Naive thymus-derived CD4-positive, alpha-beta T cell (primary cell): ENCODE measurements at regions of chr12 and their contacts with region 1.

Region 1: GRCh38 chr12:50986966-50987737 is 34.8 kb downstream of the HIGD1C start:
- DNase-seq: peak in 7 of 9 donors; percentile 14 to 56 (median 37)
- ATAC-seq: peak; percentile 53
- H3K4me3 ChIP-seq: no peak overlapping the region
- H3K4me3 Mint-ChIP-seq: no peak overlapping the region
- H3K27ac ChIP-seq: peak overlapping the region; percentile 4
- H3K27ac Mint-ChIP-seq: peak overlapping the region in 7 of 9 donors; percentile 6 to 87 (median 65)
- H3K4me1 ChIP-seq: no peaks in the 10 kb centered on the region
- H3K4me1 Mint-ChIP-seq: peaks cover 0 to 21% (median 9%) of the 10 kb centered on the region in 7 donors
- H3K27me3 ChIP-seq: no peaks in the 10 kb centered on the region
- H3K27me3 Mint-ChIP-seq: no peaks in the 10 kb centered on the region

Region 2: DNA sequence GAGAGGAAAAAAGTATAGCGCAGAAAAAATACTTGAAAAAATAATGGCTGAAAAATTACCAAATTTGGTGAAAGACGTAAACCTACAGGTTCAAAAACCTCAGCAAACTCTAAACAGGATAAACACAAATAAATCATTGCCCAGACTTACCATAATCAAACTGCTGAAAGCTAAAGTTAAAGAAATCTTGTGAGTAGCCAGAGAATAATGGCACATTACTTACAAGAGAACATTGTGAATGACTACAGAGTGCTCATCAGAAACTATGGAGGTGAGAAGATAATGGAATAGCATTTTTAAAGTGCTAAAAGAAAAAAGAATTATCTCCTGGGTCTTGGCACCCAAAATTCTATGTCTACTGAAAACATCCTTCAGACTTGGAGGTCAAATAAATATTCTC is 187.2 kb before region 1 on chr12:
- CTCF ChIA-PET with region 1: no interaction called
- POLR2A ChIA-PET with region 1: no interaction called
- intact Hi-C with region 1: no loop called
- DNase-seq: no peak
- ATAC-seq: no peak
- H3K4me3 ChIP-seq: no peak overlapping the region
- H3K4me3 Mint-ChIP-seq: no peak overlapping the region
- H3K27ac ChIP-seq: no peak overlapping the region
- H3K27ac Mint-ChIP-seq: peak overlapping the region in 1 of 9 donors; percentile 1
- H3K4me1 ChIP-seq: no peaks in the 10 kb centered on the region
- H3K4me1 Mint-ChIP-seq: peaks cover 0 to 14% (median 6%) of the 10 kb centered on the region in 7 donors
- H3K27me3 ChIP-seq: no peaks in the 10 kb centered on the region
- H3K27me3 Mint-ChIP-seq: no peaks in the 10 kb centered on the region

Region 3: DNA sequence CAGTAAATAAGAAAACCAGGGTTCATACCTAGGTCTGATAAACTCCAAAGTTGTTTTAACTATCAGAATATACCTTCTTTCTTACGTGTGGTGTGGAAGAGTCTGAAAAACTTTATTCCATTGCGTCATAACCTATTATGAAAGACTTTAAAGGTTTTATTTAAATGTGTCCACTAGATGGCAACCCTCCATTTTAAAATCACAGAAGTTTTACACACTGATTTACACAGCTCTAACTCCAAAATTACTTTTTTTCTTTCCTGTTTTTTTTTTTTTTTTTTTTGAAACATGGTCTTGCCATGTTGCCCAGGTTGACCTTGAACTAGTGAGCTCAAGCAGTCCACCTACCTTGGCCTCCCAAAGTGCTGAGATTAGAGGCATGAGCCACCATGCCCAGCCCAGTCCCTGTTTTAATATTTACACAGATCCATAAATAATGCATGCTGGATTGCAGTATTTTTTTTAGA is 161.7 kb before region 1 on chr12:
- CTCF ChIA-PET with region 1: interaction called, 28 read pairs
- POLR2A ChIA-PET with region 1: interaction called, 8 read pairs
- intact Hi-C with region 1: loop called (anchors 1 kb)
- DNase-seq: peak in 7 of 9 donors; percentile 45 to 76 (median 69)
- ATAC-seq: peak; percentile 91
- H3K4me3 ChIP-seq: no peak overlapping the region
- H3K4me3 Mint-ChIP-seq: peak overlapping the region in 2 of 10 donors; percentile 34 to 77
- H3K27ac ChIP-seq: peak overlapping the region; percentile 73
- H3K27ac Mint-ChIP-seq: peak overlapping the region; percentile 56 to 99 (median 91)
- H3K4me1 ChIP-seq: peaks cover 0 to 4% of the 10 kb centered on the region in 2 donors
- H3K4me1 Mint-ChIP-seq: peaks cover 0 to 9% (median 6%) of the 10 kb centered on the region in 7 donors
- H3K27me3 ChIP-seq: no peaks in the 10 kb centered on the region
- H3K27me3 Mint-ChIP-seq: no peaks in the 10 kb centered on the region

Region 4: GRCh38 chr12:50841716-50842531 is 145.2 kb before region 1 on chr12:
- CTCF ChIA-PET with region 1: no interaction called
- POLR2A ChIA-PET with region 1: no interaction called
- intact Hi-C with region 1: no loop called
- DNase-seq: no peak
- ATAC-seq: no peak
- H3K4me3 ChIP-seq: no peak overlapping the region
- H3K4me3 Mint-ChIP-seq: peak overlapping the region in 1 of 10 donors; percentile 22
- H3K27ac ChIP-seq: no peak overlapping the region
- H3K27ac Mint-ChIP-seq: no peak overlapping the region
- H3K4me1 ChIP-seq: no peaks in the 10 kb centered on the region
- H3K4me1 Mint-ChIP-seq: no peaks in the 10 kb centered on the region
- H3K27me3 ChIP-seq: no peaks in the 10 kb centered on the region
- H3K27me3 Mint-ChIP-seq: peaks cover 6 to 21% (median 18%) of the 10 kb centered on the region in 5 donors

Region 5: DNA sequence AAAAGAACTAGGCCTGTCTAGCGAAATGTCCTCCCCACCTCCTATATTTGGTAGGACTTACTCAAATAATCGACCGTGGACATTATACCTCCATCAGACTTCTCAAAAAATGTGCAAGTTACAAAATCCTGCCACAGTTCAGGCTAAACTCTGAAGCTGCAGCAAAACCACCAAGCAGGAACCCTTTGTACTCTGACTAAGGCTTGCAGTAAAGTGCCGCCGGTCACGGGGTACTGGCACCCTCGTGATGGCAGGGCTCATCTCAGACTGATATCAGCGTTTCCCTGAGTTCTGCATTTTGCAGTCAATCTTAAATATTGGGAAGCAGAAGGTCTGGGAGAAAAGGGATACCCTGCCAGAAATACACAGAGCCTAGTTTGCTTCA is 21.9 kb after region 1 on chr12:
- CTCF ChIA-PET with region 1: interaction called, 4 read pairs
- POLR2A ChIA-PET with region 1: no interaction called
- intact Hi-C with region 1: loop called in 1 of 2 experiments (anchors 2 kb)
- DNase-seq: peak; percentile 34 to 77 (median 68)
- ATAC-seq: peak; percentile 100
- H3K4me3 ChIP-seq: no peak overlapping the region
- H3K4me3 Mint-ChIP-seq: peak overlapping the region; percentile 48 to 93 (median 79)
- H3K27ac ChIP-seq: peak overlapping the region; percentile 65
- H3K27ac Mint-ChIP-seq: peak overlapping the region; percentile 72 to 95 (median 92)
- H3K4me1 ChIP-seq: peaks cover 0 to 27% of the 10 kb centered on the region in 2 donors
- H3K4me1 Mint-ChIP-seq: peaks cover 22 to 55% (median 47%) of the 10 kb centered on the region in 7 donors
- H3K27me3 ChIP-seq: no peaks in the 10 kb centered on the region
- H3K27me3 Mint-ChIP-seq: no peaks in the 10 kb centered on the region

Region 6: GRCh38 chr12:51118706-51119105 is 131.6 kb after region 1 on chr12:
- CTCF ChIA-PET with region 1: no interaction called
- POLR2A ChIA-PET with region 1: no interaction called
- intact Hi-C with region 1: no loop called
- DNase-seq: no peak
- ATAC-seq: no peak
- H3K4me3 ChIP-seq: no peak overlapping the region
- H3K4me3 Mint-ChIP-seq: no peak overlapping the region
- H3K27ac ChIP-seq: no peak overlapping the region
- H3K27ac Mint-ChIP-seq: no peak overlapping the region
- H3K4me1 ChIP-seq: no peaks in the 10 kb centered on the region
- H3K4me1 Mint-ChIP-seq: peaks cover 0 to 6% (median 0%) of the 10 kb centered on the region in 7 donors
- H3K27me3 ChIP-seq: no peaks in the 10 kb centered on the region
- H3K27me3 Mint-ChIP-seq: no peaks in the 10 kb centered on the region